ENCODE measurements at regions of chr1 and their contacts with region 1.

Region 1: GRCh38 chr1:151254217-151255213 is at the start of gene PSMD4:
- DNase-seq: peak; percentile 94
- H3K4me3 ChIP-seq: peak within 1 kb of the TSS; percentile 92 to 95
- H3K27ac ChIP-seq: peak within 1 kb of the TSS; percentile 81 to 85
- H3K4me1 ChIP-seq: no peaks in the 10 kb centered on the region
- H3K27me3 ChIP-seq: no peaks in the 10 kb centered on the region
- CTCF ChIP-seq: peak in 1 of 4 experiments; percentile 11
- POLR2A ChIP-seq: peak; percentile 72
- total RNA-seq, gene PSMD4: 96.1 to 116 TPM

Region 2: DNA sequence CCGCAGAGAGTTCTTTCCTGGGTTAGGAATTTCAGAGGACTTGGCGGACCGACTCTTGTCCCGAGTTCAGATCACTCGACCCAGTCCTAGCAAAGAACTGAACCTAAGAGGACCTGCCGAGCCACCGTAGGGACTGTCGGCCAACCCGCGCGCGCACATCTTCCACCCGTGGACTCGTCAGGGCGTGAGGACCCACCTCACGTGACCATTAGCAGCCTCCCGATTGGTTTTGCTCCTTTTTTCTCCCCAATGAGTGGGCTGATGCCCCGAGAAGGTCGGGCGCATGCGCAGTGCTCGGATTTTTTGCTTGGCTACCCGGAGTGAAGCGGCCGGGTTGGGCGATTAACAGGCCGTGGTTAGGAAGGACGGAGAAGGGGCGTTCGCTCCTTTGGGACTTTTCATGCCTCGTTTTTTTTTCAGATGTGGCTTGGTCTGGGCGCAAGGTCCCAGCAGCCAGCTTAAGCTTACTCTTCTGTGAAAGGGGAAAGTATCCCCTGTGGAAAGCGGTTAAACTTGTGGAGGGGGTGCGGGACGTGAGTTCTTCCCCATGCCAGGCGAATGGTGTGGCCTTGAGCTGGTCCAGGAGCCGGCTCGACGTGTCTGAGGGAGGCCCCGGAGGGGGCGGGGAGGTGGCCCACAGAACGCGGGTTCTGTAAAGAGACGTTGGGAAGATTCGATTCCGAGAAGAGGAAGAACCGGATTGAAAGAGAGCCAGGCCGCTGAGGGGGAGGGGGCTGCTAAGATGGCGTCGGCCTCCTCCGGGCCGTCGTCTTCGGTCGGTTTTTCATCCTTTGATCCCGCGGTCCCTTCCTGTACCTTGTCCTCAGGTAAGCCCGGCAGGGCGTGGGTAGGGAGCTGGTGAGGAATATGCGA is 56.0 kb before region 1 on chr1 and contains the start of gene PIP5K1A:
- intact Hi-C with region 1: loop called (anchors 2 kb)
- DNase-seq: peak; percentile 96
- H3K4me3 ChIP-seq: peak within 1 kb of the TSS; percentile 55 to 82
- H3K27ac ChIP-seq: peak within 1 kb of the TSS; percentile 83 to 95
- H3K4me1 ChIP-seq: peaks cover 6% of the 10 kb centered on the region
- H3K27me3 ChIP-seq: no peaks in the 10 kb centered on the region
- CTCF ChIP-seq: no peak
- POLR2A ChIP-seq: peak; percentile 81
- total RNA-seq, gene PIP5K1A: 40.2 to 96.7 TPM

Region 3: GRCh38 chr1:151222130-151222529 is 32.4 kb before region 1 on chr1:
- intact Hi-C with region 1: no loop called
- DNase-seq: no peak
- H3K4me3 ChIP-seq: no peak overlapping the region
- H3K27ac ChIP-seq: no peak overlapping the region
- H3K4me1 ChIP-seq: no peaks in the 10 kb centered on the region
- H3K27me3 ChIP-seq: no peaks in the 10 kb centered on the region
- CTCF ChIP-seq: no peak
- POLR2A ChIP-seq: no peak

Measured in prostate gland (tissue), 2 donors.